ENCODE measurements at regions of chr9 and their contacts with region 1.

Region 1: DNA sequence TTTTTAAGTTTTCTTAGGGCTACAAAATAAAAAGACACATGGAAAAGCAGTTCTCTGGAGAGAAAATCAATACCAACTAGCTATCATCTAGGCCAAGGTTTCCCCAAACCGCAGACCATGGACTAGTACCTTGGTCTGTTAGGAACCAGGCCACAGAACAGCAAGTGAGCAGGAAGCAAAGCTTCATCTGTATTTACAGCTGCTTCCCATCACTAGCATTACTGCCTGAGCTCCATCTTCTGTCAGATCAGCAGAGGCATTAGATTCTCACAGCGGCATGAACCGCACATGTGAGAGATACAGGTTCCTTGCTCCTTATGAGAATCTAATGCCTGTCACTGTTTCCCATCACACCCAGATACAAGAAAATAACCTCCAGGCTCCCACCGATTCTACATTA is 1907.6 kb upstream of the ACO1 start:
- DNase-seq: no peak
- ATAC-seq: no peak
- H3K4me3 ChIP-seq: no peak overlapping the region
- H3K27ac ChIP-seq: no peak overlapping the region
- H3K4me1 ChIP-seq: no peaks in the 10 kb centered on the region
- H3K27me3 ChIP-seq: no peaks in the 10 kb centered on the region
- CTCF ChIP-seq: no peak

Region 2: DNA sequence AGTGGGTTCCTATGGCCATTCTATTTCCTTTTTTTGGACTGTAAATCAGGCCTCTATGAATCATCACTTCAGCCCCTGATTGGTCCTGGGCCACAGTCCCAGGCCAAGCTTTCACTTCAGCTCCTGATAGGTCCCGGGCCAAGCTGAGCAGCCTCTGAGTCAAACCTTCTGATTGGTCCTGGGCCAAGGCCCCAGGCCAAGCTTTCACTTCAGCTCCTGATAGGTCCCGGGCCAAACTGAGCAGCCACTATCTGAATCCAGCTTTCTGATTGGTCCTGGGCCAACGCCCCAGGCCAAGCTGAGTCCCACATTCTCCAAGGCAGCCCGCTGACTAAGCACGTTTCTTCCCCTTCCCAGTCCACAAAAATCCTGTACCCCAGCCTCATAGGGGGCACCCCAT is 65.3 kb before region 1 on chr9:
- CTCF ChIA-PET with region 1: no interaction called
- POLR2A ChIA-PET with region 1: no interaction called
- in situ Hi-C with region 1: no loop called
- intact Hi-C with region 1: loop called (anchors 10 kb)
- DNase-seq: no peak
- ATAC-seq: no peak
- H3K4me3 ChIP-seq: no peak overlapping the region
- H3K27ac ChIP-seq: no peak overlapping the region
- H3K4me1 ChIP-seq: no peaks in the 10 kb centered on the region
- H3K27me3 ChIP-seq: no peaks in the 10 kb centered on the region
- CTCF ChIP-seq: no peak

Region 3: DNA sequence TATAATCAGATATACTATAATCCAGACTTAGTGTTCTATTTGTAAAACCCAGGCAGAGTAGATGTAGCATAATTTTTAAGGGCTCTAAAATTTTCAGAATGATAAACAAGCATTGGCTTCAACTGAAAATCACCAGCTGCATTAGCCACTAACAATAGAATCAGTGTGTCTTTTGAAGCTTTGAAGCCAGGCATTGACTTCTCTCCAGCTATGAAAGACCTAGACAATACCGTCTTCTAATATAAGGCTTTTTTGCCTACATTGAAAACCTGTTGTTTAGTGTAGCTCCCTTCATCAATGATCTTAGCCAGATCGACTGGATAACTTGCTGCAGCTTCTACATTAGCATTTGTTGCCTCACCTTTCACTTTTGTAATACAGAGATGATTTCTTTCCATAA is 30.3 kb after region 1 on chr9:
- CTCF ChIA-PET with region 1: no interaction called
- POLR2A ChIA-PET with region 1: no interaction called
- in situ Hi-C with region 1: no loop called
- intact Hi-C with region 1: no loop called
- DNase-seq: no peak
- ATAC-seq: no peak
- H3K4me3 ChIP-seq: no peak overlapping the region
- H3K27ac ChIP-seq: no peak overlapping the region
- H3K4me1 ChIP-seq: no peaks in the 10 kb centered on the region
- H3K27me3 ChIP-seq: no peaks in the 10 kb centered on the region
- CTCF ChIP-seq: no peak

Region 4: DNA sequence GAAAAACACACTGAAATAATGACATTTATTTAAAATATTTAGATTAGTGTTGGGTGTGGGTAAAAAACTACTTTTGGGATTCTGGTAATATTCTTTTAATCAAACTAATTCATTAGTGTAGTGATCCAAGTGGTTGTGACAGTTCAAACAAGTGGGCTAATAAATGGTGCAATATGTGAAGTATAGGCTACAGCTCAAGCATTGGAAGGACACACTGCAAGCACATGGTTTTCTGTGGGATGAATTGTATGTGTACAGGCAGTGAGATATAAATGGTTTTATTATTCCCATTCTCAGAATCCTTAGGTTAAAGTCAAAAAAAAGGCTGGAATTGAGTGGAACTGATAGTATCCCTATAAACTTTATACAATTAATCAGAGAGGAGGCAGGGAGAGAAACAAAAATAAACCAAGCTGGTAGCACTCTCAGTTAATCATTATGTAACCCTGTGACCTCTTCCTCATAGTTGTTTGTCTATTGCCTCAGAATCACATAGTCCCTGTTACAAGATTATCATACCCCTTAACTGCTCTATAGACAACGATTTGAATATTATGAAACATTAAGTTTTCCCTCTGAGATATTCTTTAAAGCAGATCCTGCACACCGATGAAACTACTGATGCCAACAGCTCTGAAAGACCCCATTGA is 152.2 kb after region 1 on chr9:
- CTCF ChIA-PET with region 1: no interaction called
- POLR2A ChIA-PET with region 1: no interaction called
- in situ Hi-C with region 1: no loop called
- intact Hi-C with region 1: no loop called
- DNase-seq: no peak
- ATAC-seq: no peak
- H3K4me3 ChIP-seq: no peak overlapping the region
- H3K27ac ChIP-seq: no peak overlapping the region
- H3K4me1 ChIP-seq: no peaks in the 10 kb centered on the region
- H3K27me3 ChIP-seq: no peaks in the 10 kb centered on the region
- CTCF ChIP-seq: no peak

Region 5: GRCh38 chr9:31119882-31120454 is 643.1 kb after region 1 on chr9:
- CTCF ChIA-PET with region 1: no interaction called
- POLR2A ChIA-PET with region 1: no interaction called
- in situ Hi-C with region 1: no loop called
- intact Hi-C with region 1: no loop called
- DNase-seq: no peak
- ATAC-seq: no peak
- H3K4me3 ChIP-seq: no peak overlapping the region
- H3K27ac ChIP-seq: no peak overlapping the region
- H3K4me1 ChIP-seq: no peaks in the 10 kb centered on the region
- H3K27me3 ChIP-seq: no peaks in the 10 kb centered on the region
- CTCF ChIP-seq: peak; percentile 57

Measured in Panc1 (cell line).